Vagina (tissue), 2 donors: ENCODE measurements at regions of chr19 and their contacts with region 1.

Region 1: GRCh38 chr19:19192078-19192882 is at the starts of genes BORCS8 and RFXANK:
- DNase-seq: peak; percentile 98 to 99
- H3K4me3 ChIP-seq: peak within 1 kb of the TSS; percentile 94 to 97
- H3K27ac ChIP-seq: peak within 1 kb of the TSS; percentile 99
- H3K4me1 ChIP-seq: peaks cover 52% of the 10 kb centered on the region
- H3K27me3 ChIP-seq: no peaks in the 10 kb centered on the region
- CTCF ChIP-seq: peak in 1 of 3 experiments; percentile 15
- POLR2A ChIP-seq: peak in 1 of 2 donors; percentile 43
- total RNA-seq, gene BORCS8: 18.9 TPM
- total RNA-seq, gene RFXANK: 61.6 TPM

Region 2: DNA sequence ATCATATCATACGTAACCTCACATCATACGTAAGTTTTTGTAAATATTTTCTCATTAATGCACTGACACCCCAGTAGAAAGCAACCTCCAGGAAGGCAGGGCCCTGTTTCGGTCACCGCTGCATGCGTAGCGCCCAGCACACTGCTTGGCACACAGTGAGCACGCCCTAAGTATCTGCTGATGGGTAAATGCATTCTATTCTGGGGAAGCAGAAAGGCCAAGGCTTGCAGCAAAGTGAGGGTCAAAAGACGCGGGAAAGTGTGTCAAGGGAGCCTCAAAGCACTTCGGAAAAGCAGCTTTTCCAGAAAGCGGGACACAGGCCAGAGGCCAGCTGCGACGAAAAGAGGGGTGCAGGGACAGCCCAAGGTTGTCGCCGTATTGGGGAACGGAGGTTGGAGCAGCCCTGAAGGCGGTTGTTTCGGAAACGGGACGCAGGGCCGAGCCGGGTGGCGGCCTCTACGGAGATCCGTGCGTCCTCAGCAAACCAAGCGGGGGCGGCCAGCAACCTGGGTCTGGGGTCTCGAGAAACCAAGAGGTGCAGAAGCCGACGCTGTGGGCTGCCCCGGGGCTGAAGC is 127.6 kb after region 1 on chr19:
- intact Hi-C with region 1: loop called (anchors 10 kb)
- DNase-seq: no peak
- H3K4me3 ChIP-seq: peak overlapping the region; percentile 96 to 97
- H3K27ac ChIP-seq: peak overlapping the region; percentile 89
- H3K4me1 ChIP-seq: peaks cover 44% of the 10 kb centered on the region
- H3K27me3 ChIP-seq: no peaks in the 10 kb centered on the region
- CTCF ChIP-seq: no peak
- POLR2A ChIP-seq: no peak